ENCODE measurements at regions of chr19 and their contacts with region 1.

Region 1: DNA sequence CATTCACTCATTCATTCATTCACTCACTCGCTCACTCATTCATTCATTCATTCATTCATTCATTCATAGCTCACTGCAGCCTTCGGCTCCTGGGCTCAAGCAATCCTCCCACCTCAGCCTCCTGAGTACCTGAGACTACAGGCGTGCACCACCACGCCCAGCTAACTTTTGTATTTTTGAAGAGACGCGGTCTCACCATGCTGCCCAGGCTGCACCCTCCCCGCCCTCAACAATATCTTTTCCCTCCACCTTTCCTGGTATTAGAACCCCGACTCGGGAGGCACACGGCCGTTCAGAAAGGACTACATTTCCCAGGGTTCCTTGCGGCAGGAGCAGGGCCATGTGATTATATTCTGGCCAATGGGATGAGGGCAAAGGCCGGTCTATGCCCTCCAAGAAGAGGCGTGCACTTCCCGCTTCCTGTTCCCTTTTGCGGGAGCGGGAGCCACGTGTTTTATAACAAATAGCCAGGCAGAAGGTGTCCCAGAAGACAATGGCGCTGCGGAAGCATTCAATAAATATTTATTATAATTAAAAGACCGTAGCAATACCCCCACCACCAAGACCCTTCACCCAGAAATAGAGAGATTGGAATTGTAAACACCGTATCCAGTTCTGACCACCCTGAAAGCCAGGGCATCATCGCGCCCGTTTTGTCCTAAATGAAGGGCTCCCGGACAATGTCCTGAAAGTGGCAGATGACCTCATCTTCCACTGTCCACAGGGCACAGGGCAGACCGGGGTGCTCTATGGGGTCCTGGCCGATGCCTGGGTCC is 15.9 kb downstream of the TICAM1 start:
- DNase-seq: peak; percentile 88
- CTCF ChIP-seq: no peak

Region 2: GRCh38 chr19:4732680-4733114 is 82.9 kb before region 1 on chr19:
- CTCF ChIA-PET with region 1: interaction called, 19 read pairs
- POLR2A ChIA-PET with region 1: no interaction called
- DNase-seq: peak; percentile 83
- CTCF ChIP-seq: peak; percentile 59

Region 3: GRCh38 chr19:4831304-4831978 is 15.8 kb after region 1 on chr19 and contains the start of gene TICAM1:
- CTCF ChIA-PET with region 1: interaction called, 42 read pairs
- POLR2A ChIA-PET with region 1: interaction called, 5 read pairs
- DNase-seq: peak; percentile 85
- CTCF ChIP-seq: no peak

Region 4: GRCh38 chr19:4851551-4852290 is 36.1 kb after region 1 on chr19:
- CTCF ChIA-PET with region 1: interaction called, 242 read pairs
- POLR2A ChIA-PET with region 1: interaction called, 4 read pairs
- DNase-seq: peak; percentile 84
- CTCF ChIP-seq: peak; percentile 84

Region 5: GRCh38 chr19:4896372-4896771 is 80.8 kb after region 1 on chr19:
- CTCF ChIA-PET with region 1: interaction called, 11 read pairs
- POLR2A ChIA-PET with region 1: no interaction called
- DNase-seq: no peak
- CTCF ChIP-seq: no peak

Region 6: GRCh38 chr19:5031231-5032100 is 215.9 kb after region 1 on chr19:
- CTCF ChIA-PET with region 1: interaction called, 76 read pairs
- POLR2A ChIA-PET with region 1: no interaction called
- DNase-seq: peak; percentile 93
- CTCF ChIP-seq: peak; percentile 97

Measured in GM10248 (cell line).